MCF 10A (cell line): ENCODE measurements at regions of chr7 and their contacts with region 1.

Region 1: GRCh38 chr7:101217388-101218235 is at the starts of genes PLOD3 and ZNHIT1:
- DNase-seq: peak; percentile 99
- H3K4me3 Mint-ChIP-seq: peak within 1 kb of the TSS; percentile 99
- H3K27ac Mint-ChIP-seq: peak within 1 kb of the TSS; percentile 94
- H3K4me1 Mint-ChIP-seq: peaks cover 29% of the 10 kb centered on the region
- H3K27me3 Mint-ChIP-seq: no peaks in the 10 kb centered on the region
- CTCF ChIP-seq: no peak
- total RNA-seq, gene PLOD3: 125 and 134 TPM in 2 replicates
- total RNA-seq, gene ZNHIT1: 63.9 and 70.9 TPM in 2 replicates

Region 2: DNA sequence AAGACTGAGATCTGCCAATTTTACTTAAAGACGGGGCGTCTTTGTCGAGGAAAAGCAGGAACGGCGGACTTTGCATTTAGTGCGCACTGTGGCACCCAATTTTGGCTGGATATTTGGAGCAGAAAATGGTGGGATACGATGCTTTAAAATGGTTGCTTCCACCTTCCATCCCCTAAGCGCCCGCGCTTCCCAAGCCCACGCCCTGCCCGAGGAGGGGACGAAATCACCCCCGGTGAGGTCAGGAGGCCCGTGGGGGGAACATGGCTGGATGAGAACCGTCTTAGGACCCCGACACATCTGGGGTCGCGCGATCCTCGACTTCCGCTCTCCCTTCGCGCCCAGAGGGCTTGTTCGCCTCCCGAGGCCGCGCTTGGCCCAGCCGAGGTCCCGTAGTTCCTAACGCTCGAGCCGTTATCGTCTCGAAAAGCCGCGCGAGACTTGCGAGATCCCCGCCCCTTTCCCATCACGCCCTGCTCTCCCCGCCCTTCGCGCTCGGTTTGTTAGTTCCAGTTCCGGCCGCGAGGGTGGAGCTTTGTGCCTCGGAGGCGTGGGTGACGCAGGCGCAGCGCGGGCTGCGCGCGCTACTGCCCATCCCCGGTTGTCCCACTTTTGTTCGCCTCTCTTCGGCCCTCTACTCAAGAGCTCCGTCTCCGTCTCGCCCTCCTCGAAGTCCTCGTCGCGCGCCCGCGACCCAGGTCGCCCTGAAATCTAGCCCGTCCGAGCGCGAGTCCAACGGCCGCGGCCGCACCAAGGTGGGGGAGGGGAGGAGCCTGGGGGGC is 342.8 kb before region 1 on chr7 and contains the start of gene SRRT:
- CTCF ChIA-PET with region 1: no interaction called
- POLR2A ChIA-PET with region 1: interaction called, 12 read pairs
- intact Hi-C with region 1: no loop called
- DNase-seq: peak; percentile 99
- H3K4me3 Mint-ChIP-seq: peak within 1 kb of the TSS; percentile 97
- H3K27ac Mint-ChIP-seq: peak within 1 kb of the TSS; percentile 98
- H3K4me1 Mint-ChIP-seq: peaks cover 30% of the 10 kb centered on the region
- H3K27me3 Mint-ChIP-seq: no peaks in the 10 kb centered on the region
- CTCF ChIP-seq: no peak
- total RNA-seq, gene SRRT: 111 and 142 TPM in 2 replicates

Region 3: DNA sequence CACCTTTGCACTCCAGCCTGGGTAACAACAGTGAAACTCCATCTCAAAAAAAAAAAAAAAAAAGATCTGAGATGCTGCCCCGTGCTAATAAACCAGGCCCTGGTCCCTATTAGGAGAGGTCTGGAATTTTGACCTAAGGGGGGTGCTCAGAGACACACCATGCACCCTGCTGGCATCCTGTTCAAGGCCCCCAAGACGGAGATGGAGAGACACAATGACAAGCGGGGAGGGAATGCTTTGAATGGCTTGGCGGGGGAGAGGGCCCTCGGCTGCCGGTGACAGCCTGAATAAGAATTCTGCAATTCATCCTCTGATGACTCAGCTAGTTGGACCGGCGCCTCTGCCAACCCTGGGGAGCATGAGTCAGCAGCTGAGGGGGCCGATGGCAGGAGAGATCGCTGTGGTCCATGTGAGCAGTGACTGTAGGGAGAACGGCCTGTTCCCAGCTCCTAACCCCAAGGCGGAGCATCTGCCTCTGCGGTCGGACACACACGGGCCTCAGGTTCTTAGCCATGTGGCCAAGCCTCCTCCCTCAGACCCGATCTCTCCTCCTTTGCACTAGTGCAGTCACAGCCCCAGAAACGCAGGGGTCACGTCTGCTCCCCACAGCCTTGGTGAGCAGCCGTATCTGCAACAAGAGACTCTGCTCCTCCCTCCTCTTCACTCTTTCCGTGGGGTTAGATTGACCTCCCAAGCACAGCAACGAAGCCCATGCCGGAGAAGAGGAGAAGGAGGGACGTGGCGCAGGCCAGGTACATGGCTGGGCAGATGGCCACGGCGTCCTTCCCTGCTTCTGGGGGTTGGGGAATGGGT is 117.4 kb before region 1 on chr7:
- CTCF ChIA-PET with region 1: no interaction called
- POLR2A ChIA-PET with region 1: interaction called, 15 read pairs
- intact Hi-C with region 1: no loop called
- DNase-seq: peak; percentile 97
- H3K4me3 Mint-ChIP-seq: peak overlapping the region; percentile 54
- H3K27ac Mint-ChIP-seq: peak overlapping the region; percentile 73
- H3K4me1 Mint-ChIP-seq: peaks cover 29% of the 10 kb centered on the region
- H3K27me3 Mint-ChIP-seq: no peaks in the 10 kb centered on the region
- CTCF ChIP-seq: no peak

Region 4: GRCh38 chr7:101235050-101235449 is 17.4 kb after region 1 on chr7:
- CTCF ChIA-PET with region 1: interaction called, 3 read pairs
- POLR2A ChIA-PET with region 1: interaction called, 17 read pairs
- intact Hi-C with region 1: no loop called
- DNase-seq: no peak
- H3K4me3 Mint-ChIP-seq: no peak overlapping the region
- H3K27ac Mint-ChIP-seq: no peak overlapping the region
- H3K4me1 Mint-ChIP-seq: peaks cover 5% of the 10 kb centered on the region
- H3K27me3 Mint-ChIP-seq: no peaks in the 10 kb centered on the region
- CTCF ChIP-seq: no peak

Region 5: GRCh38 chr7:101244375-101245146 is 26.9 kb after region 1 on chr7 and contains the start of gene FIS1:
- CTCF ChIA-PET with region 1: interaction called, 22 read pairs
- POLR2A ChIA-PET with region 1: interaction called, 78 read pairs
- intact Hi-C with region 1: loop called (anchors 1 kb)
- DNase-seq: peak; percentile 87
- H3K4me3 Mint-ChIP-seq: peak within 1 kb of the TSS; percentile 80
- H3K27ac Mint-ChIP-seq: peak within 1 kb of the TSS; percentile 97
- H3K4me1 Mint-ChIP-seq: peaks cover 5% of the 10 kb centered on the region
- H3K27me3 Mint-ChIP-seq: no peaks in the 10 kb centered on the region
- CTCF ChIP-seq: peak; percentile 76
- total RNA-seq, gene FIS1: 213 and 221 TPM in 2 replicates

Region 6: DNA sequence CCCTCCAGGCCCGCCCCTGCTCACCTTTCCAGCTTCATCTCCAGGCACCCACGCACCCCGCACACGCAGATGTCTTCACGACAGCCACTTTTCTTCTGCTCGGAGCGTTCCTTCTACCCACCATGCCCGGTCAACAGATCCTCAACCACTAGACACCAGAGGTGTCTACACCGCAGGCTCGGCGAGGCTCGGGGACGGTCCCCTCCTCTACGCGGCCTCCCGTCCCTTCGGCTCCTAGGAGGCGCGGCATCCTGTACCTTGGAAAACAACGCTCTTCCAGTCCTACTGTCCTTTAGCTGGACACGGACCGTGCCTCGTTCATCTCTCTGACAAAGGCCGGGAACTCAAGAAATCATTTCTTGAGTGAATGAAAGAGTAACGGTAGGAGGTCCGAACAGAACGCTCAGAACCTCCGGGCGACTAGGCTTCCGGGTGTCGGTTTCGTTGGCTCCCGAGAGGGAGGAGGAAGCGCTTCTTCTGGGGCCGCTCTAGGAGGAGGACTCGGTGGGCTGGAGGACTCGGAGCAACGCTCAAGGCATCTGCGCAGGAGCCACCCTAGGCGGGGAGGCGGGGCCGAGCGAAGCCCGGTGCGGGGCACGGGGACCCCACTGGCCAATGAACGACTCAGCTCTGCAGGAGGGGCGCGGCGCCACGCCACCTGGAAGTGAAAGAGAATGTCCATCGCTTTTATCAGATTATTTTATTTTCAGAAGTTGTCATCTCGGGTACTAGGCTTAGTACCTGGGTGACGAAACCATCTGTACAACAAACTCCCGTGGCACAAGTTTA is 34.5 kb after region 1 on chr7:
- CTCF ChIA-PET with region 1: interaction called, 12 read pairs
- POLR2A ChIA-PET with region 1: interaction called, 78 read pairs
- intact Hi-C with region 1: no loop called
- DNase-seq: peak; percentile 97
- H3K4me3 Mint-ChIP-seq: peak overlapping the region; percentile 90
- H3K27ac Mint-ChIP-seq: peak overlapping the region; percentile 92
- H3K4me1 Mint-ChIP-seq: peaks cover 11% of the 10 kb centered on the region
- H3K27me3 Mint-ChIP-seq: no peaks in the 10 kb centered on the region
- CTCF ChIP-seq: no peak

Region 7: DNA sequence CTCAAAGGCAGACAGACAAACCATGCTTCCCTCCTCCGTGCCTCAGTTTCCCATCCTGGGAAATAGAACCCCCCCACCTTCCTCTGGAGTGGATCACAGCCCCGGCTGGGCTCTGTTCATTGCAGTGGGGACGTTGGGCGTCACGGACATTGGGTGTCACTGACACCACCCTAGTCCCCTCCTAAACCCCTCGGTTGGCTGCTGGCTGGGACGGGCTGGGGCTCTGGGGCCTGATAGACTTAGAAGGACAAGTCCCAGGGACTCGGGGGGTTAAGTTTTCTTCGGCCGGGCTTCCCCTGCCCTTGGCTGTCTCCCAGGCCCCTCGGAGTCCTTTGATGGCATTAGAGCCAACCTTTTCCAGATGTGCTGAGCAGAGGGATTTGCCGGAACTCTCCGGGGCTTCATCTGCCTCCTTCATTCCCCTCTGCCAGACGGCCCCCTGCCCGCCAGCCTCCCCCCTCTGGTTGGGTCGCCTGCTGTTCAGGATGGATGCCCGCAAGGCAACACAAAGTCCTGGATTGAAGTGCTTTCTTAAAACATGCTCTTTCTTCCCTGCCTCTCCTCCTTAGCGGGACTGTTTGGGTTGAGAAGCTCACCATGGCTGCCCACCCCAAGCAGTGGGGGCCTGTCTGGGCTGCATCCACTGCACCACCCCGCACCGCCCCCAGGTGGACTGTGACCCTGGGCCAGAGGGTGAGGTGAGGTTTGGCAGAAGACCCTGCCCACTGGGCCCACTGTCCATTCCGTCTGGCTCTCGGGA is 218.0 kb after region 1 on chr7:
- CTCF ChIA-PET with region 1: no interaction called
- POLR2A ChIA-PET with region 1: no interaction called
- intact Hi-C with region 1: no loop called
- DNase-seq: no peak
- H3K4me3 Mint-ChIP-seq: no peak overlapping the region
- H3K27ac Mint-ChIP-seq: no peak overlapping the region
- H3K4me1 Mint-ChIP-seq: no peaks in the 10 kb centered on the region
- H3K27me3 Mint-ChIP-seq: peaks cover 67% of the 10 kb centered on the region
- CTCF ChIP-seq: no peak

Region 8: GRCh38 chr7:101494602-101495329 is 277.2 kb after region 1 on chr7:
- CTCF ChIA-PET with region 1: no interaction called
- POLR2A ChIA-PET with region 1: no interaction called
- intact Hi-C with region 1: no loop called
- DNase-seq: no peak
- H3K4me3 Mint-ChIP-seq: no peak overlapping the region
- H3K27ac Mint-ChIP-seq: no peak overlapping the region
- H3K4me1 Mint-ChIP-seq: no peaks in the 10 kb centered on the region
- H3K27me3 Mint-ChIP-seq: peaks cover 5% of the 10 kb centered on the region
- CTCF ChIP-seq: no peak